Astrocyte of the cerebellum (primary cell): ENCODE measurements at regions of chr6 and their contacts with region 1.

Region 1: GRCh38 chr6:144296973-144297372 is 11.8 kb downstream of the UTRN start:
- DNase-seq: no peak
- H3K4me3 ChIP-seq: no peak overlapping the region
- CTCF ChIP-seq: no peak

Region 2: GRCh38 chr6:144215932-144216667 is 80.9 kb before region 1 on chr6:
- in situ Hi-C with region 1: loop called (anchors 5 kb)
- DNase-seq: peak; percentile 95
- H3K4me3 ChIP-seq: peak overlapping the region; percentile 67
- CTCF ChIP-seq: peak; percentile 83

Region 3: DNA sequence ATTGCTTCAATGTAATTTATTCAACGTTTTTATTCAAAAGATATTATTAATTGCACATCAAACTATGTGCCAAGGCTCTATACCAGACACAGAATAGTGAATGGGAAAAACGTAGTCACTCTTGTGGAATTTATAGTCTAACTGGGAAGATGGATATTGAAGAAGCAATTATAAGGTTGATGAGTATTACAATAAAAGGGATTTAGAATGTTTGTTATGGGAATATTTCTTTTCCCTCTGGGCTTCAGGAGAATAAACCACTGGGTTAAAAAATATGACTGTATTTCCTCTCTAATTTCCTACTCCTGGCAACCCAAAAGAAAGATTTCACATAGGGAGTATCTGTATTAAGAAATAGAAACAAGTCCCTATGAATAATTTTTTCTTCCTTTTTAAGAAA is 37.0 kb before region 1 on chr6:
- in situ Hi-C with region 1: no loop called
- DNase-seq: no peak
- H3K4me3 ChIP-seq: no peak overlapping the region
- CTCF ChIP-seq: no peak

Region 4: GRCh38 chr6:144353871-144354314 is 56.9 kb after region 1 on chr6:
- in situ Hi-C with region 1: no loop called
- DNase-seq: no peak
- H3K4me3 ChIP-seq: no peak overlapping the region
- CTCF ChIP-seq: no peak

Region 5: GRCh38 chr6:144394210-144394609 is 97.2 kb after region 1 on chr6:
- in situ Hi-C with region 1: loop called (anchors 5 kb)
- DNase-seq: peak; percentile 68
- H3K4me3 ChIP-seq: no peak overlapping the region
- CTCF ChIP-seq: no peak

Region 6: GRCh38 chr6:144408161-144408560 is 111.2 kb after region 1 on chr6:
- in situ Hi-C with region 1: no loop called
- DNase-seq: no peak
- H3K4me3 ChIP-seq: no peak overlapping the region
- CTCF ChIP-seq: no peak